Vagina (tissue), 2 donors: ENCODE measurements at regions of chr12 and their contacts with region 1.

Region 1: GRCh38 chr12:120580787-120581723 is at the start of gene POP5:
- DNase-seq: peak; percentile 97
- H3K4me3 ChIP-seq: peak within 1 kb of the TSS; percentile 71 to 73
- H3K27ac ChIP-seq: peak within 1 kb of the TSS; percentile 38
- H3K4me1 ChIP-seq: peaks cover 36% of the 10 kb centered on the region
- H3K27me3 ChIP-seq: no peaks in the 10 kb centered on the region
- CTCF ChIP-seq: peak in 1 of 3 experiments; percentile 22
- POLR2A ChIP-seq: no peak
- total RNA-seq, gene POP5: 35.6 TPM

Region 2: GRCh38 chr12:120710031-120710804 is 129.2 kb after region 1 on chr12 and contains the start of gene UNC119B:
- intact Hi-C with region 1: loop called (anchors 5 kb)
- DNase-seq: no peak
- H3K4me3 ChIP-seq: peak within 1 kb of the TSS; percentile 78 to 83
- H3K27ac ChIP-seq: peak within 1 kb of the TSS; percentile 94
- H3K4me1 ChIP-seq: peaks cover 32% of the 10 kb centered on the region
- H3K27me3 ChIP-seq: no peaks in the 10 kb centered on the region
- CTCF ChIP-seq: no peak
- POLR2A ChIP-seq: no peak
- total RNA-seq, gene UNC119B: 16.0 TPM

Region 3: DNA sequence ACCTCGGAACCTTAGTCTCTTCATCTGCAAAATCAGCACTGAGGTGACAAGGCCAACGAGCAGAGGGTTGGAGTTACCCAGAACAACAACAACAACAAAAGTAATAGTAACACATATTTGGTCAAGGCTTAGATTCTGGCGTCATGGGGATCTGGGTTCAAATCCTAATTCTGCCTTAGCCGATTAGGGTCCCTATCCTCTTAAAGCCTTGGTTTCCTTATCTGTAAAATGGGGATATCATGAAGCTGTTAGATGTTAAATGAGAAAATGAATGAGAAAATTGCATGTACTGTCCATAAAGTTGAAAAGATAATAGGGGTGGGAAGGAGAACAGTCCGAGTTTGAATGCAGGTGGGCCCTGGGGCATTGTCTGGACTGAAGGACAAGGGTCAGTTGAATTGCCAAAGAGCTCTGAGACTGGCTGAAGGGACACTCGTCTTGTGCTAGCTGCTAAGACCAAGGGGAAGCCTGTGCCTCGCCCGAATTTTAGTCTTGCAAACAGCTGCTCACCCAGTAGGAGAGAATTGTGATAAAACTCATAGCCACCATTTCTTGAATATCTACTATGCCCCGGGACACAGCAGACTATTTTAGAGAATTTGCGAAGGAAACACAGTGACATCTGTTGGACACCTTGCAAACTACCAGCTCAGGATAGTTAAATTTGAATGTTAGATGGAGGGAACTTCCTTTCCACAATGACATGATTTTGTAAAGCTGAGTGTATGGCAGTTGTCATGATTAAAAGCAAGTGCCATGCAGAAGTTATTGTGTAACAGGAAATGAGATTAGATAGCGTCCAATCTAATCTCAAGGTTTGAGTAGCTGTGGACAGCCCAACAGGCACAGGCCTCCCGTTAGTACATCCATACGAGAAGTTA is 390.5 kb after region 1 on chr12:
- intact Hi-C with region 1: loop called (anchors 5 kb)
- DNase-seq: no peak
- H3K4me3 ChIP-seq: no peak overlapping the region
- H3K27ac ChIP-seq: no peak overlapping the region
- H3K4me1 ChIP-seq: peaks cover 7% of the 10 kb centered on the region
- H3K27me3 ChIP-seq: no peaks in the 10 kb centered on the region
- CTCF ChIP-seq: peak; percentile 65 to 70 (median 70)
- POLR2A ChIP-seq: no peak